B cell (primary cell): ENCODE measurements at regions of chr13 and their contacts with region 1.

Region 1: GRCh38 chr13:79423801-79424642 is 18.0 kb upstream of the RBM26 start:
- DNase-seq: peak; percentile 50
- ATAC-seq: peak; percentile 53
- H3K4me3 ChIP-seq: no peak overlapping the region
- H3K4me3 Mint-ChIP-seq: no peak overlapping the region
- H3K27ac ChIP-seq: no peak overlapping the region
- H3K27ac Mint-ChIP-seq: no peak overlapping the region
- H3K4me1 ChIP-seq: no peaks in the 10 kb centered on the region
- H3K4me1 Mint-ChIP-seq: no peaks in the 10 kb centered on the region
- H3K27me3 ChIP-seq: no peaks in the 10 kb centered on the region
- H3K27me3 Mint-ChIP-seq: no peaks in the 10 kb centered on the region
- CTCF ChIP-seq: peak; percentile 91

Region 2: DNA sequence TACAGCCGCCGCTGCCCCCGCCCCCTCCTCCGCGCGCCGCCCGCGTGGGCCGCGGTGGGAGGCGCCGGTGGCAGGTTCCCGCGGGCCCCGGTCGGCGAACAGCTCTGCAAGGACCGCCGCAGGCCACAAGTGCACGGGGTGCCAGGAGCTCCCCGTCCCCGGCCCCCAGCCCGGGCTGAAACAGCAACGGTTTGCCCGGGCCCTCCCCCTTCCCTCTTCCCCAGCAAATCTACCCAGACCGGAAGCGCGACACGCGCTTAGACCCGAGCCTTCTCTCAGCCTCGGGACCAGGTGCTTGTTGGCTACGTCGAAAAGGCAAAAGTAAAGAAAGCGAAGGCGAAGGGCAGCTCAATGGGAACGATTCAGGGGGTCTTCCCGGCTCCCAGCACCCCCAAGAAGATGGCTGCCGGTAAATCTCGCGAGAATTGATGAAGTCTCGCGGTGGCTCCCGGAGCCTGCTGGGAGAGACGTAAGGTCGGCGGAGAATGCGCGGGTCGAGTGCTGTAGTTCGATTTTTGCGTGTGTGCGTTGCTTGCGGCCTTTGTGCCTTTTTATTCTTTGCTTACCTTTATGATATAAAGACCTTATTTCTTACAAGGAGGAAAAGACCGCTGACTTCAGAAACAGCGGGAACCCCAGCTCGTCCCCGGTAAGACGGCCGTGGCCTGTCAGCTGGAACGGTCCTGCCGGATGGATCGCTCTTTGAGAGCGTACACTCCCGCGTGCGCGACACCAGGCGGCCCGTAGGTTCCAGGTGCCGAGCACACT is 18.0 kb before region 1 on chr13 and contains the start of gene RBM26:
- CTCF ChIA-PET with region 1: interaction called, 12 read pairs
- POLR2A ChIA-PET with region 1: interaction called, 3 read pairs
- intact Hi-C with region 1: no loop called
- DNase-seq: peak; percentile 97
- ATAC-seq: peak; percentile 84
- H3K4me3 ChIP-seq: peak within 1 kb of the TSS; percentile 69 to 95 (median 87)
- H3K4me3 Mint-ChIP-seq: no peak within 1 kb of the TSS
- H3K27ac ChIP-seq: peak within 1 kb of the TSS; percentile 94 to 95
- H3K27ac Mint-ChIP-seq: peak within 1 kb of the TSS; percentile 98
- H3K4me1 ChIP-seq: peaks cover 32 to 48% of the 10 kb centered on the region in 2 donors
- H3K4me1 Mint-ChIP-seq: peaks cover 26% of the 10 kb centered on the region
- H3K27me3 ChIP-seq: no peaks in the 10 kb centered on the region
- H3K27me3 Mint-ChIP-seq: no peaks in the 10 kb centered on the region
- CTCF ChIP-seq: peak; percentile 15
- total RNA-seq, gene RBM26: 159 and 165 TPM in 2 replicates

Region 3: GRCh38 chr13:79435561-79435990 is 11.6 kb after region 1 on chr13:
- CTCF ChIA-PET with region 1: interaction called, 10 read pairs
- POLR2A ChIA-PET with region 1: no interaction called
- intact Hi-C with region 1: no loop called
- DNase-seq: no peak
- ATAC-seq: no peak
- H3K4me3 ChIP-seq: no peak overlapping the region
- H3K4me3 Mint-ChIP-seq: no peak overlapping the region
- H3K27ac ChIP-seq: no peak overlapping the region
- H3K27ac Mint-ChIP-seq: no peak overlapping the region
- H3K4me1 ChIP-seq: no peaks in the 10 kb centered on the region
- H3K4me1 Mint-ChIP-seq: no peaks in the 10 kb centered on the region
- H3K27me3 ChIP-seq: no peaks in the 10 kb centered on the region
- H3K27me3 Mint-ChIP-seq: no peaks in the 10 kb centered on the region
- CTCF ChIP-seq: no peak

Region 4: GRCh38 chr13:79457390-79457789 is 33.4 kb after region 1 on chr13:
- CTCF ChIA-PET with region 1: interaction called, 10 read pairs
- POLR2A ChIA-PET with region 1: no interaction called
- intact Hi-C with region 1: no loop called
- DNase-seq: no peak
- ATAC-seq: no peak
- H3K4me3 ChIP-seq: no peak overlapping the region
- H3K4me3 Mint-ChIP-seq: no peak overlapping the region
- H3K27ac ChIP-seq: no peak overlapping the region
- H3K27ac Mint-ChIP-seq: no peak overlapping the region
- H3K4me1 ChIP-seq: no peaks in the 10 kb centered on the region
- H3K4me1 Mint-ChIP-seq: no peaks in the 10 kb centered on the region
- H3K27me3 ChIP-seq: peaks cover 0 to 4% (median 2%) of the 10 kb centered on the region in 4 experiments
- H3K27me3 Mint-ChIP-seq: peaks cover 30% of the 10 kb centered on the region
- CTCF ChIP-seq: no peak

Region 5: GRCh38 chr13:79541426-79542049 is 117.5 kb after region 1 on chr13:
- CTCF ChIA-PET with region 1: interaction called, 122 read pairs
- POLR2A ChIA-PET with region 1: no interaction called
- intact Hi-C with region 1: loop called (anchors 1 kb)
- DNase-seq: peak; percentile 72
- ATAC-seq: no peak
- H3K4me3 ChIP-seq: no peak overlapping the region
- H3K4me3 Mint-ChIP-seq: no peak overlapping the region
- H3K27ac ChIP-seq: no peak overlapping the region
- H3K27ac Mint-ChIP-seq: no peak overlapping the region
- H3K4me1 ChIP-seq: no peaks in the 10 kb centered on the region
- H3K4me1 Mint-ChIP-seq: no peaks in the 10 kb centered on the region
- H3K27me3 ChIP-seq: no peaks in the 10 kb centered on the region
- H3K27me3 Mint-ChIP-seq: no peaks in the 10 kb centered on the region
- CTCF ChIP-seq: peak; percentile 99

Region 6: DNA sequence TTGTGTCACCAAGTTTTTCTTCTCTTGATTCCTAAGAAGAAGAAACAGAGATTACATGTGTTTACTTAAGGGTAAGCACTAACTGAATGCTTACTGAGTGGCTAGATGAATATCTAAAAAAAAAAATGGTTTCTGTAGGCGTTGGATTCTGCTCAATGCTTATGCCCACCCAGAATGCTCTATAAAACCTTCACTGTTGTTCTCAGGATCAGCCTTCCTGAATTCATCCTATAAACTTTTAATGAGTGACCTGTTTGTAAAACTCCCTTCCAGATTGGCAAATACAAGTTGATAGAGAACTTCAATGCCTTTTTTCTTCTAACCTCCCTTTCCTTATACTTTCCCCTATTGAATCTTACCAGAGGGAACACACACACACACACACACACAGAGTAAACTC is 147.1 kb after region 1 on chr13:
- CTCF ChIA-PET with region 1: no interaction called
- POLR2A ChIA-PET with region 1: no interaction called
- intact Hi-C with region 1: no loop called
- DNase-seq: no peak
- ATAC-seq: no peak
- H3K4me3 ChIP-seq: no peak overlapping the region
- H3K4me3 Mint-ChIP-seq: no peak overlapping the region
- H3K27ac ChIP-seq: no peak overlapping the region
- H3K27ac Mint-ChIP-seq: no peak overlapping the region
- H3K4me1 ChIP-seq: no peaks in the 10 kb centered on the region
- H3K4me1 Mint-ChIP-seq: no peaks in the 10 kb centered on the region
- H3K27me3 ChIP-seq: no peaks in the 10 kb centered on the region
- H3K27me3 Mint-ChIP-seq: peaks cover 8% of the 10 kb centered on the region
- CTCF ChIP-seq: no peak